ENCODE measurements at regions of chr16 and their contacts with region 1.

Region 1: GRCh38 chr16:83826146-83826913 is 18.6 kb downstream of the HSBP1 start:
- DNase-seq: peak; percentile 71 to 95 (median 85)
- H3K4me3 ChIP-seq: no peak overlapping the region
- H3K27ac ChIP-seq: no peak overlapping the region
- H3K4me1 ChIP-seq: no peaks in the 10 kb centered on the region
- H3K27me3 ChIP-seq: no peaks in the 10 kb centered on the region
- CTCF ChIP-seq: peak; percentile 81 to 96 (median 91)
- POLR2A ChIP-seq: no peak

Region 2: GRCh38 chr16:83882163-83882885 is 56.0 kb after region 1 on chr16:
- intact Hi-C with region 1: loop called (anchors 5 kb)
- DNase-seq: no peak
- H3K4me3 ChIP-seq: no peak overlapping the region
- H3K27ac ChIP-seq: no peak overlapping the region
- H3K4me1 ChIP-seq: no peaks in the 10 kb centered on the region
- H3K27me3 ChIP-seq: no peaks in the 10 kb centered on the region
- CTCF ChIP-seq: no peak
- POLR2A ChIP-seq: no peak

Region 3: GRCh38 chr16:83952940-83953795 is 126.8 kb after region 1 on chr16 and contains the start of gene OSGIN1:
- intact Hi-C with region 1: no loop called
- DNase-seq: peak; percentile 95 to 99 (median 98)
- H3K4me3 ChIP-seq: peak within 1 kb of the TSS; percentile 42 to 69 (median 54)
- H3K27ac ChIP-seq: peak within 1 kb of the TSS; percentile 93 to 99 (median 97)
- H3K4me1 ChIP-seq: peaks cover 24 to 33% of the 10 kb centered on the region in 2 donors
- H3K27me3 ChIP-seq: no peaks in the 10 kb centered on the region
- CTCF ChIP-seq: peak in 3 of 6 experiments; percentile 8 to 13 (median 8)
- POLR2A ChIP-seq: peak; percentile 88 to 97
- total RNA-seq, gene OSGIN1: 16.1 to 64.9 (median 19.6) TPM

Region 4: DNA sequence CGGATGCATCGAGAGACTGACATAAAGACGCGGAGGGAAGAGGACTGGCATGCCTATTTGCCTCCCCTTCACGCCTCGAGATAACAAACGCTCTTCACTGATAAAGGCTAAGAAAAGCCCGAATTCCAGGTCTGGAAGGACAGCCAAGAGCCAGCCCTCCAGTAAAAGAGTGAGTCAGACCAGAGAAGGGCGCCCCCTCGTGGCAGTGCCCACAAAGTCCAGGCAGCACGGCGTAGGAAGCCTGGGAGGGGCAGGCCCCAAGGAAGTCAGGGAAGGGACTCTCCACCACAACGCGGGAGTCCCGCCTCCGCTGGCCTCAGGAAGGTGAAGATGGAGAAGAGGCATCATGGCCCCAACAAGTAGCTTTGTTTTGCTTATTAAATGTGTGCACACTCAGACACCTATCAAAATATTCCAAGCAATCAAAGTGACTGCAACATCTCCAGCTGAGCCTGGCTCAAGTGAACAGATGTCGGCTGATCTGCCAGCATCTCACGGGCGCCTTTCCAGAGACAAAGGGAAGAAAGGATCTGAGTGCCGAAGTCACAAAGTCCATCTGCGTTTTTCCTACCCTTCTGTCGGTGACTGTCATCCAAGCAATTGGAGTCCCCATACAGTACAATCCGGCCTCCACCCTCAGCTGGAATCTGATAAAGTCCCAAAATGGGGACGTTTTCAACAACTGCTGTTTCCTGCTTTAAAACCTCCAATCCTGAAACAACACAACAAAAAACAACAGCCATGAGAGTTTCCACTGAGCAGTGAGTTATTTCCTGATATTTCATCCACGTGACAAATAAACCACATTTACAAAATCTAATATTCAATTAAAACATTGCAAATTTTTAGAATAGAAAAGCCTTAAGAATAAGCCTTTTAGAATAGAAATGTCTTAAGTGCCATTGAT is 236.7 kb after region 1 on chr16:
- intact Hi-C with region 1: loop called in 1 of 2 experiments (anchors 10 kb)
- DNase-seq: peak; percentile 85 to 94 (median 88)
- H3K4me3 ChIP-seq: no peak overlapping the region
- H3K27ac ChIP-seq: peak overlapping the region in 1 of 5 donors; percentile 13
- H3K4me1 ChIP-seq: peaks cover 0 to 7% of the 10 kb centered on the region in 2 donors
- H3K27me3 ChIP-seq: no peaks in the 10 kb centered on the region
- CTCF ChIP-seq: peak; percentile 91 to 99 (median 92)
- POLR2A ChIP-seq: no peak

Measured in adrenal gland (tissue), 19 donors.